Activated T-helper 2 cell treated with anti-CD3 and anti-CD28 coated beads, Interferon-gamma antibody, Interleukin-2, Interleukin-4, amounts not matched to agents 10 μg/mL and 5 μg/mL and 100 μg/mL, durations not matched to agents 14 hours and 24 hours and 36 hours (primary cell): ENCODE measurements at regions of chr7 and their contacts with region 1.

Region 1: DNA sequence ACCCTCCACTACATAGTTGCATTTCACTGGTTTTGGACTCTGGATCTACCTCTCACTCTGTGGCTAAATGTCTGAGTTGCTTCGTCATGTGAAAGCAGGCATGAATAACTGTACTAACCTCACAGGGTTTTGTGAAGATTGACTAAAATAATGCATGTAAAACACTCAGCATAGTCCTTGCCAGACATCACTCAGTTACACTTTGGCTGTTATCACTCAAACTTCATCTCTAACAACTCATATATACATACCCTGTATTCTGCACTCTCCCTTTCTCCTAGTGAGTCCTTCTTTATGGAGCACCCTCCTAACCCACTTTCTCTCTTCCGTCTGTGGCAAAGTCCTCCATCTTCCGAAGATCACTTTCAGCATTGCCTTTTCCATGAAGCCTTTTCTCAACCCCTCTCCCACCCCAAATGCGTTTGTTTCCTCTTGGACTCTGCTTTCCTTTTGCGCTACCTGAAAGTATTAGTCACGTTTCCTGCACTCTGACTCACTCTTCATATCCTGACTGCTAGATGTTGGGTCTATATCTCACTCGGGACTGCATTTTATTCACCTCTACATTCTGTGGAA is 72.6 kb downstream of the OSBPL3 start:
- DNase-seq: peak; percentile 45
- H3K4me3 Mint-ChIP-seq: no peak overlapping the region
- H3K27ac Mint-ChIP-seq: no peak overlapping the region
- H3K4me1 Mint-ChIP-seq: peaks cover 48% of the 10 kb centered on the region
- H3K27me3 Mint-ChIP-seq: no peaks in the 10 kb centered on the region

Region 2: DNA sequence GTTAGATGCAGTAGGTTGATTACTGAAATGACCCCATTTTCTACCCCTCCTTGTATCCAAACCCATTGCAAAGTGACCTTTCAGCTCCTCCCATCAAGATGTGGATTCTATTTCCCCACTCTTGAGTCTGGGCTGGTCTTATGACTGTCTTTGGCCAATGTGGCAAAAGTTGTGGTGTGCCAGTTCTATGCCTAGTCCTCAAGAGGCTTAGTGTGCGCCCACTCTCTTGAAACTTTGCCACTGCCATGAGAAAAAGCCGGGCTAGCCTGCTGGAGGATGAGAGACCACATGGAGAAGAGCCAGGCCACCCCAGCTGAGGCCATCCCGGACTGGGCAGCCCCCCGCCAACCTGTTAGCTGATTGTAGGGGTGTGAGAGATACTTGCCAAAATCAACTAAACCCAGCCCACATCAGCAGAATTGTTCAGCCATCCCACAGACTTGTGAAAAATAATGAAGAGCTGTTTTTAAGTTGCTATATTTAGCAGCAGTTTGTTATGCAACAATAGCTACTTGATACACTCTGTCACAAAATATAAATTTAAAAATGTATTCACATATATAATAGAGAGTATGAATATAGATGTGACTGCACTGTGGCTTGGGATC is 465.1 kb before region 1 on chr7:
- intact Hi-C with region 1: no loop called
- DNase-seq: no peak
- H3K4me3 Mint-ChIP-seq: no peak overlapping the region
- H3K27ac Mint-ChIP-seq: no peak overlapping the region
- H3K4me1 Mint-ChIP-seq: peaks cover 30% of the 10 kb centered on the region
- H3K27me3 Mint-ChIP-seq: peaks cover 3% of the 10 kb centered on the region

Region 3: GRCh38 chr7:24595671-24596418 is 311.6 kb before region 1 on chr7:
- intact Hi-C with region 1: loop called (anchors 10 kb)
- DNase-seq: no peak
- H3K4me3 Mint-ChIP-seq: no peak overlapping the region
- H3K27ac Mint-ChIP-seq: no peak overlapping the region
- H3K4me1 Mint-ChIP-seq: peaks cover 8% of the 10 kb centered on the region
- H3K27me3 Mint-ChIP-seq: no peaks in the 10 kb centered on the region

Region 4: GRCh38 chr7:24697416-24697815 is 210.0 kb before region 1 on chr7:
- intact Hi-C with region 1: no loop called
- DNase-seq: no peak
- H3K4me3 Mint-ChIP-seq: no peak overlapping the region
- H3K27ac Mint-ChIP-seq: no peak overlapping the region
- H3K4me1 Mint-ChIP-seq: no peaks in the 10 kb centered on the region
- H3K27me3 Mint-ChIP-seq: no peaks in the 10 kb centered on the region

Region 5: GRCh38 chr7:24869572-24869971 is 37.8 kb before region 1 on chr7:
- intact Hi-C with region 1: loop called (anchors 1 kb)
- DNase-seq: no peak
- H3K4me3 Mint-ChIP-seq: no peak overlapping the region
- H3K27ac Mint-ChIP-seq: no peak overlapping the region
- H3K4me1 Mint-ChIP-seq: peaks cover 46% of the 10 kb centered on the region
- H3K27me3 Mint-ChIP-seq: no peaks in the 10 kb centered on the region

Region 6: DNA sequence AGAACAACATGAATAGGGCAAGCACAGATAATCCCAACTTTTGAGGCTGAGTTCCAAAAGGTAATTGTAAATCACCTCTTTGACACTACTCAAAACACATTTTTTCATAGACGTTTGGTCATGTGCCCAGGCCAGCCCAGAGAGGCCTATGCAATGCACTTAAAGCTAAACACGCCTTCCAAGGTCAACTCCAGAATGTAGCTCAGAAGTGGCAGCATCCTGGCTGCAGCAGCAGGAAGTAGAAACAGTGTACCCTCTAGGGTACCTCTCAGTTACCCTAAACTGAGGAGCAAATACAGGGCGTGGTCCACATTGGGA is 13.9 kb after region 1 on chr7:
- intact Hi-C with region 1: loop called (anchors 1 kb)
- DNase-seq: no peak
- H3K4me3 Mint-ChIP-seq: peak overlapping the region; percentile 41
- H3K27ac Mint-ChIP-seq: peak overlapping the region; percentile 91
- H3K4me1 Mint-ChIP-seq: peaks cover 93% of the 10 kb centered on the region
- H3K27me3 Mint-ChIP-seq: no peaks in the 10 kb centered on the region

Region 7: GRCh38 chr7:24959735-24960485 is 52.5 kb after region 1 on chr7:
- intact Hi-C with region 1: no loop called
- DNase-seq: no peak
- H3K4me3 Mint-ChIP-seq: peak overlapping the region; percentile 19
- H3K27ac Mint-ChIP-seq: no peak overlapping the region
- H3K4me1 Mint-ChIP-seq: peaks cover 80% of the 10 kb centered on the region
- H3K27me3 Mint-ChIP-seq: no peaks in the 10 kb centered on the region

Region 8: GRCh38 chr7:25028370-25029021 is 121.1 kb after region 1 on chr7:
- intact Hi-C with region 1: loop called (anchors 1 kb)
- DNase-seq: peak; percentile 32
- H3K4me3 Mint-ChIP-seq: peak overlapping the region; percentile 32
- H3K27ac Mint-ChIP-seq: peak overlapping the region; percentile 82
- H3K4me1 Mint-ChIP-seq: peaks cover 51% of the 10 kb centered on the region
- H3K27me3 Mint-ChIP-seq: peaks cover 17% of the 10 kb centered on the region